OCI-LY7 (cell line): ENCODE measurements at regions of chr16 and their contacts with region 1.

Region 1: GRCh38 chr16:50368410-50369132 is at the start of gene BRD7:
- DNase-seq: peak; percentile 82
- H3K4me3 ChIP-seq: peak within 1 kb of the TSS; percentile 100
- H3K27ac ChIP-seq: peak within 1 kb of the TSS; percentile 32
- H3K4me1 ChIP-seq: peaks cover 27% of the 10 kb centered on the region
- CTCF ChIP-seq: no peak
- total RNA-seq, gene BRD7: 78.5 and 90.0 TPM in 2 replicates

Region 2: GRCh38 chr16:50024684-50025536 is 343.7 kb before region 1 on chr16 and contains the start of gene CNEP1R1:
- CTCF ChIA-PET with region 1: no interaction called
- POLR2A ChIA-PET with region 1: no interaction called
- intact Hi-C with region 1: loop called (anchors 5 kb)
- DNase-seq: peak; percentile 96
- H3K4me3 ChIP-seq: peak within 1 kb of the TSS; percentile 98
- H3K27ac ChIP-seq: peak within 1 kb of the TSS; percentile 38
- H3K4me1 ChIP-seq: peaks cover 14% of the 10 kb centered on the region
- CTCF ChIP-seq: peak; percentile 99
- total RNA-seq, gene CNEP1R1: 19.9 and 23.1 TPM in 2 replicates

Region 3: GRCh38 chr16:50065624-50066481 is 302.7 kb before region 1 on chr16 and contains the start of gene HEATR3:
- CTCF ChIA-PET with region 1: no interaction called
- POLR2A ChIA-PET with region 1: no interaction called
- intact Hi-C with region 1: loop called (anchors 10 kb)
- DNase-seq: peak; percentile 93
- H3K4me3 ChIP-seq: peak within 1 kb of the TSS; percentile 80
- H3K27ac ChIP-seq: peak within 1 kb of the TSS; percentile 89
- H3K4me1 ChIP-seq: peaks cover 26% of the 10 kb centered on the region
- CTCF ChIP-seq: no peak
- total RNA-seq, gene HEATR3: 36.8 and 50.6 TPM in 2 replicates

Region 4: GRCh38 chr16:50152807-50153452 is 215.6 kb before region 1 on chr16 and contains the start of gene TENT4B:
- CTCF ChIA-PET with region 1: no interaction called
- POLR2A ChIA-PET with region 1: no interaction called
- intact Hi-C with region 1: loop called (anchors 5 kb)
- DNase-seq: peak; percentile 83
- H3K4me3 ChIP-seq: peak within 1 kb of the TSS; percentile 95
- H3K27ac ChIP-seq: peak within 1 kb of the TSS; percentile 73
- H3K4me1 ChIP-seq: peaks cover 27% of the 10 kb centered on the region
- CTCF ChIP-seq: no peak
- total RNA-seq, gene TENT4B: 5.6 and 5.8 TPM in 2 replicates

Region 5: GRCh38 chr16:50509521-50510341 is 141.2 kb after region 1 on chr16:
- CTCF ChIA-PET with region 1: no interaction called
- POLR2A ChIA-PET with region 1: no interaction called
- intact Hi-C with region 1: loop called (anchors 10 kb)
- DNase-seq: peak; percentile 35
- H3K4me3 ChIP-seq: no peak overlapping the region
- H3K27ac ChIP-seq: no peak overlapping the region
- H3K4me1 ChIP-seq: no peaks in the 10 kb centered on the region
- CTCF ChIP-seq: peak; percentile 89

Region 6: DNA sequence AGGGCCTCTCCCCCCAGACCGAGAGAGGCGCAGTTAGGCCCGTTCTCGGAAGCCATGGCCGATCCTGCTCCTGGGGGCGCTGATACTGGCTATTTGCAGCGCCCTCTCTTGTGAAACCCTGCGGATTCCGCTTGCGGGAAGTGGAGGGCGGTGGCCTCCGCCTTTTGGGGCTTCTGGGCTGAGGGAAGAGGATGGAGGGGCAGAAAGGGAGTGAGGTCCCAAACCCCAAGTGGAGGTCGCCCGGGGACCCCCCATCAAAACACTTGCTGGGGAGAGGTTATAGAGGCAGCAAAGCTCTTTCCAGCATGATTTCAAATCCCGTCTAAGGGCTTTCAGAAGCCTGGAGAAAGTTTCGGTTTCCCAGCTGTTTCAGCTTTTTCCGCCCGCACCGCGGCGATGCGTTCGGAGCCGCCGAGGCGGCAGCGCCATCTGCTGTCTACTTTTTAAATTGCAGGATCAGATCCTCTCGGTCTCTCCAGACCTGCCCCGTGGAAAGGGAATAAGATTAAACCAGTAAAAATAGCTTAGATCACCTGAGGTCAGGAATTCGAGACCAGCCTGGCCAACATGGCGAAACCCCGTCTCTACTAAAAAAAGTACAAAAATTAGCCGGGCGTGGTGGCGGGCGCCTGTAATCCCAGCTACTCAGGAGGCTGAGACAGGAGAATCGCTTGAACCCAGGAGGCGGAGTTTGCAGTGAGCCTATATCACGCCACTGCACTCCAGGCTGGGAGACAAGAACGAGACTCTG is 296.7 kb after region 1 on chr16:
- CTCF ChIA-PET with region 1: no interaction called
- POLR2A ChIA-PET with region 1: no interaction called
- intact Hi-C with region 1: no loop called
- DNase-seq: peak; percentile 54
- H3K4me3 ChIP-seq: no peak overlapping the region
- H3K27ac ChIP-seq: no peak overlapping the region
- H3K4me1 ChIP-seq: no peaks in the 10 kb centered on the region
- CTCF ChIP-seq: peak; percentile 84

Region 7: GRCh38 chr16:50741808-50742575 is 373.4 kb after region 1 on chr16 and contains the start of gene CYLD:
- CTCF ChIA-PET with region 1: no interaction called
- POLR2A ChIA-PET with region 1: no interaction called
- intact Hi-C with region 1: loop called (anchors 5 kb)
- DNase-seq: peak; percentile 99
- H3K4me3 ChIP-seq: peak within 1 kb of the TSS; percentile 78
- H3K27ac ChIP-seq: no peak within 1 kb of the TSS
- H3K4me1 ChIP-seq: peaks cover 12% of the 10 kb centered on the region
- CTCF ChIP-seq: no peak
- total RNA-seq, gene CYLD: 7.4 and 14.0 TPM in 2 replicates